K562 (cell line): ENCODE measurements at regions of chr2 and their contacts with region 1.

Region 1: GRCh38 chr2:231604685-231605606 is 12.3 kb downstream of the TEX44 start:
- DNase-seq: peak; percentile 91 to 92 (median 92)
- ATAC-seq: peak; percentile 93
- H3K4me3 ChIP-seq: peak overlapping the region; percentile 30
- H3K27ac ChIP-seq: no peak overlapping the region
- H3K4me1 ChIP-seq: peaks cover 0 to 18% of the 10 kb centered on the region in 2 experiments; a peak in 3 of 5 replicates
- H3K27me3 ChIP-seq: no peaks in the 10 kb centered on the region
- CTCF ChIP-seq: no peak
- EP300 ChIP-seq: no peak
- POLR2A ChIP-seq: no peak
- RAD21 ChIP-seq: no peak

Region 2: GRCh38 chr2:231294571-231295362 is 310.2 kb before region 1 on chr2:
- CTCF ChIA-PET with region 1: no interaction called
- POLR2A ChIA-PET with region 1: no interaction called
- in situ Hi-C with region 1: no loop called
- intact Hi-C with region 1: no loop called
- DNase-seq: no peak
- ATAC-seq: no peak
- H3K4me3 ChIP-seq: no peak overlapping the region
- H3K27ac ChIP-seq: no peak overlapping the region
- H3K4me1 ChIP-seq: peaks cover 0 to 3% of the 10 kb centered on the region in 2 experiments; a peak in 3 of 5 replicates
- H3K27me3 ChIP-seq: peaks cover 11 to 34% of the 10 kb centered on the region in 2 experiments; a peak in 3 of 5 replicates
- CTCF ChIP-seq: no peak
- EP300 ChIP-seq: no peak
- POLR2A ChIP-seq: no peak
- RAD21 ChIP-seq: no peak

Region 3: DNA sequence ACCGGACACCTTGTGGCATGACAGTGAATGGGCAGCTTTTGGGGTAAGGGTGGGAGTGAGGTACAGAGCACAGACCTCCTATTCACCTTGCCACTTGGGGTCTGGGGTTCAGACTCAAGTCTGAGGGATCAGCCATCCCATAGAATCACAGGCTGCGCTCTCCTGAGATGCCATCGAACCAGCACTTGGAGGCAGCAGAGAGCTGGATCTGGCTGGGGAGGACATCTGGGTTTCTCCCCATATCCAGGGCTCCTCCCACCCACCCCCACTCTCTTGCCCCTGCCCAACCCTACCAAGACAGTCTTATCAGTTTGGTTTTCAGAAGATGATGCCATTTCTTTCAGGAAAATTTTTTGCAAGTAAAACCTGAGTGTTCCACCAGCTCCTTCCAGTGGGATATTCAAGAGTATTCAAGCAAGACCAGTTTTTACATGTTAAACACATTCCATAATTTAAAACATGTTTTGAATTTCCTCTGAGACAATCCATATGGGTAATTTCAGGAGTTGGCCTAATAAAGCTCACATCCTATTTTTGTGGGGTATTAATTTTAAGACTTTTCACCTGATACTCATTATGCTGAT is 41.5 kb before region 1 on chr2:
- CTCF ChIA-PET with region 1: interaction called, 6 read pairs
- POLR2A ChIA-PET with region 1: no interaction called
- in situ Hi-C with region 1: no loop called
- intact Hi-C with region 1: loop called (anchors 1 kb)
- DNase-seq: peak; percentile 78 to 81 (median 80)
- ATAC-seq: peak; percentile 98
- H3K4me3 ChIP-seq: no peak overlapping the region
- H3K27ac ChIP-seq: no peak overlapping the region
- H3K4me1 ChIP-seq: no peaks in the 10 kb centered on the region; a peak in 1 of 5 replicates
- H3K27me3 ChIP-seq: no peaks in the 10 kb centered on the region; a peak in 1 of 5 replicates
- CTCF ChIP-seq: peak; percentile 56 to 78 (median 75)
- EP300 ChIP-seq: no peak
- POLR2A ChIP-seq: no peak
- RAD21 ChIP-seq: peak; percentile 19 to 58; a peak in 3 of 4 replicates